ENCODE measurements at regions of chr1 and their contacts with region 1.

Region 1: DNA sequence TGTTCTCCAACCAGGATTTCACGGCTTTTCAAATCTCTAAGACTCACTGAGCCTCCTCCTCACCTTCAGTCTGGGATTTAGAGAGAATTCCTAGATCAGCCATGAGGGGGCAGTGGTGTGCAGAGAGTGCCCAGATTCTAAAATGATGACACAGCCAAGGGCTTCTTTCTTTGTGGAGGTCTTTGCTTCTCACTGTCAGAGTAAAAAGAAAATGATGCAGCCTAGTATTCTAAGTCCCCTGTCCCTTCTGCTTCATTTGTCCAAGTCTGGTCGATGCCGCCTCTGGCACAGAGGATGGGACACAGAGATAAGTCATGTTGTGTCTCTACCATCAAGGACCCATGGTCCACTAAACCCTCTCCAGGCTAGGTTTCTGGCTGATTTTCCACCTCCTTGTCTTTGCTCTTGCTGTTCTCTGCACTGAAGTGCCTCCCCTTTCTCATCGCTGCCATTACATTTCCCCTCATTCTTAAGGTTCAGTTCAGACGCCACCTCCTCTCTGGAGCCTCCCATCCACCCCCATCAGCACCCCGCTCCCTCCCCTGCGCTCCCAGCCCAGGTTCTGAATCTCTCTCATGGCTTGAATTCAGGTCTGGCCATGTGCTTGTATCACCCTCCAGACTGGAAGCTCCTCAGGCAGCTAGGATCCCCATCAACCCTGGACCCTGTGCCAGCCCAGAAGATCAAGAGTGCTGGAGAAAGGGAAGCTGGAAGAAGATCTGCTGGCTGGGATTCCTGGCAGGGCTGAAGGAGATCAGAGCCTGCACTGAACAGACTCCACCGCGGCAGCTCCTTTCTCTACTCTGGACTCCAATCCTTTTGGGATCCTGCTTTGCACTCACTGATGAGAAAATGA is 12.0 kb upstream of the TINAGL1 start:
- DNase-seq: peak in 2 of 4 donors; percentile 32 to 69
- ATAC-seq: peak; percentile 91
- H3K4me3 ChIP-seq: no peak overlapping the region
- H3K27ac ChIP-seq: no peak overlapping the region
- H3K4me1 ChIP-seq: no peaks in the 10 kb centered on the region
- H3K27me3 ChIP-seq: no peaks in the 10 kb centered on the region
- CTCF ChIP-seq: peak; percentile 80 to 81

Region 2: GRCh38 chr1:31593770-31594632 is 29.6 kb after region 1 on chr1:
- intact Hi-C with region 1: loop called in 1 of 2 experiments (anchors 1 kb)
- DNase-seq: peak in 3 of 4 donors; percentile 76 to 91 (median 79)
- ATAC-seq: peak; percentile 98
- H3K4me3 ChIP-seq: no peak overlapping the region
- H3K27ac ChIP-seq: no peak overlapping the region
- H3K4me1 ChIP-seq: peaks cover 0 to 10% of the 10 kb centered on the region in 2 donors
- H3K27me3 ChIP-seq: peaks cover 0 to 12% of the 10 kb centered on the region in 2 donors
- CTCF ChIP-seq: peak; percentile 80 to 86

Region 3: GRCh38 chr1:31617917-31618660 is 53.7 kb after region 1 on chr1:
- intact Hi-C with region 1: no loop called
- DNase-seq: peak in 3 of 4 donors; percentile 35 to 82 (median 58)
- ATAC-seq: peak; percentile 88
- H3K4me3 ChIP-seq: peak overlapping the region; percentile 30 to 31
- H3K27ac ChIP-seq: no peak overlapping the region
- H3K4me1 ChIP-seq: peaks cover 0 to 8% of the 10 kb centered on the region in 2 donors
- H3K27me3 ChIP-seq: peaks cover 7 to 35% of the 10 kb centered on the region in 2 donors
- CTCF ChIP-seq: peak; percentile 69 to 73

Region 4: DNA sequence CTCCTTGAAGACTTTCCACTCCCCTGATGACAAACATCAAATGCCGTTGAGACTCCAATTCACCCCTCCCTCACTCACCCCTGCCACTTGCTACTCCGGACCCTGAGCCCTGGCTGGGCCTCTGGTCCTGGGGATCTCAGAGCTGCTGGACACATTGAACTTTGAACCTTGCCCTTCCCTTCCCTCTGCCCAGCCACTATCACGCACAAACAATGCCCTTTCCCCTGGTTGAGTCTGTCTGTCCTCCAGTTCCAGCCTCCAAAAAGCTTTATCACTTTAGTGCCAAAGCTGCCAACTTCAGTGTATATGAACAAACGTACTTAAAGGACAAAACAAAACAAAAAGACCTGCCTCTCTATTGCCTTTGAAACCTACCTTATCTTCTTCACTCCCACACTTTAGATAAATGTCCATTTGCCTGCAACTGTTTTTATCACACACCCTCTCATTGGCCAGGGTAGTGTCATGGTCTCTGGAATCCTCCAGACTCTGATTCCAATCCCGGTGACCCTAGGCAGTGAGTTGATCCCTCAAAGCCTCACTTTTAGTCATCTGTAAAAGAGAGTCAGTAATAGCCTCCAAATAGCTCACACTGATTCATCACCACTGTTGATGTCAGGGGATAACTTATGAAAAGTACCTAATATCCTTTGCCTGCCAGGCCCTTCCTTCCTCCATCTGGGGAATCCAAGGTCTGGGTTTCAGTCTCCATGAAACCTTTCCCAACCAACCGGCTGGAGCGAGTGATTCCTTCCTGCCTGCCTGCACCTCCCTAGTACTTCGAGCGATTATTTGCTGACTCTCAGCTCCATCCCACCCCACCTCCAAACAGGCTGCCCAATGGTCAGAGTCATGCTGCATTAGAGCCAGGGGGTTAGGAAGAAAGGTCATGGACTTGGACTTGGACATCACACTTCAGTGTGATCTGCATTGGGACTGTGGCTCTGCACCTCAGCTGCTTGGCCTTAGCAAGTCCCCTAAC is 267.3 kb after region 1 on chr1:
- intact Hi-C with region 1: no loop called
- DNase-seq: no peak
- ATAC-seq: no peak
- H3K4me3 ChIP-seq: no peak overlapping the region
- H3K27ac ChIP-seq: no peak overlapping the region
- H3K4me1 ChIP-seq: peaks cover 0 to 9% of the 10 kb centered on the region in 2 donors
- H3K27me3 ChIP-seq: peaks cover 0 to 13% of the 10 kb centered on the region in 2 donors
- CTCF ChIP-seq: no peak

Measured in left lung (tissue), 14 donors.